Activated CD8-positive, alpha-beta T cell treated with anti-CD3 and anti-CD28 coated beads for 36 hours (primary cell): ENCODE measurements at regions of chr3 and their contacts with region 1.

Region 1: DNA sequence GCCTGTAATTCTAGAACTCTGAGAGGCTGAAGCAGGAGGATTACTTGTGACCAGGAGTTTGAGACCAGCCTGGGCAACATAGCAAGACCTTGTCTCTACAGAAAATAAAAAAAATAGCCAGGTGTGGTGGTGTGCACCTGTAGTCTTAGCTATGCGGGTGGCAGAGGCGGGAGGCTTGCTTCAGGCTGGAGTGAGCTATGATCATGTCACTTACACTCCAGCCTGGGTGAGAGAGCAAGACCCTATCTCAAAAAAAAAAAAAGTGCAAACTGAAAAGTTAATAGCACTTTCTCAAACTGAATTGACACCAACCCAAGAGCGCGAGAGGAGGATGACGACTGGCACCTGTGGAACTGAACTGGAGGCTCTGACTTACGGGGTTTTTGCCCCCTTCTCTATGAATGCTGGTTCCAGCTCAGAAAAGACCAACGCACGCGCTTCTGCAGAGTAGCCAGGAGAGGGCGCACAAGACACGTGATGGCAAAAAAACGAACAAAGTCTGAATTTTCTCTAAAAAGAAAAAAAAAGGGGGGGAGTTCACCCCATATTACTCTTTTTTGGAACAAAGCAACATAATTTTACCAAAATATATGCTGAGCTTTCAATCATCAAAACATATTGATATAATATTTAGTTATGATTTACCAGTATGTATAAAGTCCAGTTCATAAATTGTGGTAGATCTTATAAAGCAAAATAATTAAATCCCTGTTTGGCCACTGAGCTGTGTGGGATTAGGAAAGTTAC is 23.7 kb downstream of the CFAP92 start:
- DNase-seq: peak; percentile 73
- ATAC-seq: peak; percentile 80
- H3K4me3 Mint-ChIP-seq: no peak overlapping the region
- H3K27ac Mint-ChIP-seq: no peak overlapping the region
- H3K4me1 Mint-ChIP-seq: peaks cover 6% of the 10 kb centered on the region
- H3K27me3 Mint-ChIP-seq: no peaks in the 10 kb centered on the region
- CTCF ChIP-seq: peak; percentile 96

Region 2: GRCh38 chr3:128879125-128879969 is 90.8 kb before region 1 on chr3 and contains the start of gene ACAD9:
- CTCF ChIA-PET with region 1: interaction called, 19 read pairs
- POLR2A ChIA-PET with region 1: no interaction called
- intact Hi-C with region 1: no loop called
- DNase-seq: peak; percentile 96
- ATAC-seq: peak; percentile 91
- H3K4me3 Mint-ChIP-seq: peak within 1 kb of the TSS; percentile 92
- H3K27ac Mint-ChIP-seq: peak within 1 kb of the TSS; percentile 97
- H3K4me1 Mint-ChIP-seq: peaks cover 52% of the 10 kb centered on the region
- H3K27me3 Mint-ChIP-seq: no peaks in the 10 kb centered on the region
- CTCF ChIP-seq: no peak
- total RNA-seq, gene ACAD9: 50.1 to 50.5 TPM

Region 3: DNA sequence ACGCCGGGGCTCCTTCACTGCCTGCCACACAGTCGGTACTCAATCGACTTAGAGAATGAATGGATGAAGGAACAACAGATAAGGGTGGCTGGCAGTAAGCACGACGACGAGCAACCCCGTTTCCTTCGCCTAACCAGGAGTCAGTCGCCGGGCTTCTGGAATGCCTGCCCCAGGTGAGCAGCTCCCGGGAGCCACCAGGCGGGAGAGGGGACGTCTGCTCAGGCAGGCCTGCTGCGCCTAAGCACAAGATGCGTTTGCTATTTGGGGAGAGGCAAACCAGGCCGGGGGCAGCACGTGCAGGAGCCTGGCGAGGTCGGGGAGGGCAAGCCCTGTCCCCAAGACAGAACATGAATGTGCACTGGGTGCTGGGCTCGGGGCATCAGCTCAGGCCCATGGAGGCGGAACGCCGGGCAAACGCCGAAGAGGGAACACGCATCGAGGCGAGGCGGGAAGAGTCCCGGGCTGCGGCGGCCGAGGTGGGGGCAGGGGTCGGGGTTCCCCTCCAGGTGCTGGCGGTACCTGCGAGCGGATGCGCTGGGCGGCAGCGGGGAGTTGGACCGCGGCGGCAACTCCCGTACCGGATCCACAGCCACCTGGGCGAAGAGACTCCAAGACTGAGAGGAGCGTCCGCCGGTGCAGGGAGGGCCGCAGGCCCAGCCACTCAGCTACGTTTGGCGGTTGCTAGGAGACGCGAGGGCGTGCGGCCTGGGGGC is 23.5 kb after region 1 on chr3 and contains the start of gene CFAP92:
- CTCF ChIA-PET with region 1: interaction called, 73 read pairs
- POLR2A ChIA-PET with region 1: interaction called, 3 read pairs
- intact Hi-C with region 1: no loop called
- DNase-seq: peak; percentile 93
- ATAC-seq: peak; percentile 98
- H3K4me3 Mint-ChIP-seq: peak within 1 kb of the TSS; percentile 63
- H3K27ac Mint-ChIP-seq: no peak within 1 kb of the TSS
- H3K4me1 Mint-ChIP-seq: peaks cover 30% of the 10 kb centered on the region
- H3K27me3 Mint-ChIP-seq: no peaks in the 10 kb centered on the region
- CTCF ChIP-seq: no peak
- total RNA-seq, gene CFAP92: 0.38 to 0.83 TPM

Region 4: DNA sequence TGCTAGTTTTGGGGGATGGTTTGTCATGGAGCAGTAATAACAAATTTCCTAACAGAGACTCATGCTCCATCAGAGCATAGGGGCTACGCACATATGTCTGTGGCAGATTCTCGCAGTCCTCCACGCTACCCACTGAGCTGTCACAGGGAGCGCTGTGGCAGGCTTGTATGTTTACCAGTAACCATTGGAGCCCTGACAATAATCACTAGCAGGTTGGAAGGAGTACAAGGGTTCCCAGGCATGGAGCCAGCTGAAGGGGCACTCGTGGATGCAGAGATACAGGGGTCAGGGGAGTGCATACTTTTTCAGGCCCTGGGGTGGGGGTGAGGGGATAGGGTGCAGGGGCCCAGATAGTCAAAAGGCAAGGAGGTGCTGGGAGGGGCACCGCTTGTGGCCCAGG is 82.5 kb after region 1 on chr3:
- CTCF ChIA-PET with region 1: interaction called, 70 read pairs
- POLR2A ChIA-PET with region 1: interaction called, 3 read pairs
- intact Hi-C with region 1: no loop called
- DNase-seq: no peak
- ATAC-seq: no peak
- H3K4me3 Mint-ChIP-seq: no peak overlapping the region
- H3K27ac Mint-ChIP-seq: no peak overlapping the region
- H3K4me1 Mint-ChIP-seq: peaks cover 7% of the 10 kb centered on the region
- H3K27me3 Mint-ChIP-seq: no peaks in the 10 kb centered on the region
- CTCF ChIP-seq: no peak

Region 5: GRCh38 chr3:129160891-129161859 is 191.0 kb after region 1 on chr3 and contains the start of gene ISY1:
- CTCF ChIA-PET with region 1: interaction called, 31 read pairs
- POLR2A ChIA-PET with region 1: interaction called, 4 read pairs
- intact Hi-C with region 1: no loop called
- DNase-seq: peak; percentile 91
- ATAC-seq: peak; percentile 82
- H3K4me3 Mint-ChIP-seq: peak within 1 kb of the TSS; percentile 88
- H3K27ac Mint-ChIP-seq: peak within 1 kb of the TSS; percentile 98
- H3K4me1 Mint-ChIP-seq: peaks cover 27% of the 10 kb centered on the region
- H3K27me3 Mint-ChIP-seq: no peaks in the 10 kb centered on the region
- CTCF ChIP-seq: peak; percentile 84
- total RNA-seq, gene ISY1: 66.7 to 68.5 TPM

Region 6: DNA sequence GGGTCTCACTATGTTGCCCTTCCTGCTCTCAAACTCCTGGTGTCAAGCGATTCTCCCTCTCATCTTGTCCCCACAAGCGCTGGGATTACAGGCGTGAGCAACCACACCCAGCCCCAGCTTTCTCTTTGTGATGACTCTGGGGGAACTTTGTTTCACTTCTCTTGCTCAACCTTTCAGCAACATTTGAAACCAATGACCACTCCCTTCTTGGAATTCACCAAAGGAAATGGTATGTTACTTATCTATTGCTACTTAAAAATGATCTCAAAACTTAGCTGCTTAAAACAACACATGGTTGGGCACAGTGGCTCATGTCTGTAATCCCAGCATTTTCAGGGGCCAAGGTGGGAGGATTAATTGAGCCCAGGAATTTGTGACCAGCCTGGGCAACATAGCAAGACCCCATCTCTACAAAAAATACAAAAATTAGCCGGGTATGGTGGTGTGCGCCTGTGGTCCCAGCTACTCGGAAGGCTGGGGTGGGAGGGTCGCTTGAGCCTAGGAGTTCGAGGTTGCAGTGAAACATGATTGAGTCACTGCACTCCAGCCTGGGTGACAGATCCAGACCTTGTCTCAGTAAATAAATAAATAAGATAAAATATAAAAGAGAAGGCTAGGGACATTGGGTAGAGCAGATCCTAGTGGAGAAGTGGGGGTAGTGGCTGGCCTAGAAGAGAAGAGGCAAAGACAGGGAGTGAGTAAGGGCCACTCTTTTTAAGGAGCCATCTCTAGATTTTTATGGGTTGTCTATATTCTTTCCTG is 269.0 kb after region 1 on chr3:
- CTCF ChIA-PET with region 1: interaction called, 98 read pairs
- POLR2A ChIA-PET with region 1: no interaction called
- intact Hi-C with region 1: no loop called
- DNase-seq: peak; percentile 59
- ATAC-seq: peak; percentile 82
- H3K4me3 Mint-ChIP-seq: no peak overlapping the region
- H3K27ac Mint-ChIP-seq: peak overlapping the region; percentile 86
- H3K4me1 Mint-ChIP-seq: peaks cover 17% of the 10 kb centered on the region
- H3K27me3 Mint-ChIP-seq: no peaks in the 10 kb centered on the region
- CTCF ChIP-seq: no peak

Region 7: DNA sequence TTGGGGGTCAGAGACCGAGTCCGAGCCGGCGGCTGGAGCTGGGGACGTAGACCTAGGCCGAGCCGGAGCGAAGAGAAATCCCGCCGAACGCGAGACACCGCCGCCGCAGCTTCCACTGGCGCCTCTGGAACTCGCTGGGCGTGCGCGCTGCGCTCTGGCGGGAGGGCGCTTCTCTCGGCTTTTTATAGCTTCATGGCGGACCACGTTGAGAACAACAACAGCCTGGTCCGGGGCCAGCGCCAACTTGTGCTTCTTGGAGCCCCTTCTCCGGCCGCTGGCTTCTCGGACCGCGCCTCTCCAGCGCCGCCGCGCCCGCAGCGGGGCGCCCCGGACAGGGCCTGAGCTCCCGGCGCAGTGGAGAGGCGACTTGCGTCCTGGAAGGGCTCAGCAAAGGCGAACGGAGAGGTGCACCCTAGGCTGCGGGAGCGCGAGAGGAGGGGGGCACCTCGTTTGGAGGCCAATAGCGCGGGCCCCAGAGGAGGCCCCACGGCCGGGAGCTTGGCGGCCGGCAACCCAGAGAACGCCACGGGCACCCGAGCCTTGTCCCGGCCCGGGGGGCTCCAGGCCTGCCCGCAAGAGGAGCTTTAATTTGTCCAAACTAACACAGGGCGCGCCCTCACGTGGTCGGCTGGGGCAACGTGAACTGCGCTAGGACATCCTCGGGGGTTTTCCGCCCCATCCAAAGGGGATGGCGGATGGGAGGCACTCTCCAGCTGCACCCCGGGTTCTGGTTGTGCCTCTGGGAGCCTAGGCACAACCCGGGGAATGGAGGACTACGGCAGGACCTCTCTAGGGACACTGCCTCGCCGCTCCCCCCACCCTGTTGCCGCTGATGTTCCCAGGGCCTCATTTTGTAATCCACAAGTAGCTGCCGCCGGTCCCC is 346.2 kb after region 1 on chr3:
- CTCF ChIA-PET with region 1: interaction called, 13 read pairs
- POLR2A ChIA-PET with region 1: interaction called, 5 read pairs
- intact Hi-C with region 1: no loop called
- DNase-seq: peak; percentile 86
- ATAC-seq: peak; percentile 34
- H3K4me3 Mint-ChIP-seq: peak overlapping the region; percentile 80
- H3K27ac Mint-ChIP-seq: peak overlapping the region; percentile 71
- H3K4me1 Mint-ChIP-seq: peaks cover 24% of the 10 kb centered on the region
- H3K27me3 Mint-ChIP-seq: no peaks in the 10 kb centered on the region
- CTCF ChIP-seq: peak; percentile 75